ENCODE measurements at regions of chr2 and their contacts with region 1.

Region 1: GRCh38 chr2:224894356-224894755 is 147.9 kb downstream of the DOCK10 start:
- DNase-seq: no peak
- H3K4me3 Mint-ChIP-seq: peak overlapping the region; percentile 31
- H3K27ac Mint-ChIP-seq: peak overlapping the region; percentile 82
- H3K4me1 Mint-ChIP-seq: peaks cover 58% of the 10 kb centered on the region
- H3K27me3 Mint-ChIP-seq: no peaks in the 10 kb centered on the region

Region 2: GRCh38 chr2:224904381-224904780 is 10.0 kb after region 1 on chr2:
- CTCF ChIA-PET with region 1: no interaction called
- POLR2A ChIA-PET with region 1: no interaction called
- intact Hi-C with region 1: loop called (anchors 1 kb)
- DNase-seq: no peak
- H3K4me3 Mint-ChIP-seq: no peak overlapping the region
- H3K27ac Mint-ChIP-seq: no peak overlapping the region
- H3K4me1 Mint-ChIP-seq: peaks cover 53% of the 10 kb centered on the region
- H3K27me3 Mint-ChIP-seq: no peaks in the 10 kb centered on the region

Region 3: GRCh38 chr2:224909885-224910573 is 15.7 kb after region 1 on chr2:
- CTCF ChIA-PET with region 1: no interaction called
- POLR2A ChIA-PET with region 1: no interaction called
- intact Hi-C with region 1: loop called (anchors 1 kb)
- DNase-seq: peak; percentile 47
- H3K4me3 Mint-ChIP-seq: no peak overlapping the region
- H3K27ac Mint-ChIP-seq: peak overlapping the region; percentile 69
- H3K4me1 Mint-ChIP-seq: peaks cover 47% of the 10 kb centered on the region
- H3K27me3 Mint-ChIP-seq: no peaks in the 10 kb centered on the region

Region 4: DNA sequence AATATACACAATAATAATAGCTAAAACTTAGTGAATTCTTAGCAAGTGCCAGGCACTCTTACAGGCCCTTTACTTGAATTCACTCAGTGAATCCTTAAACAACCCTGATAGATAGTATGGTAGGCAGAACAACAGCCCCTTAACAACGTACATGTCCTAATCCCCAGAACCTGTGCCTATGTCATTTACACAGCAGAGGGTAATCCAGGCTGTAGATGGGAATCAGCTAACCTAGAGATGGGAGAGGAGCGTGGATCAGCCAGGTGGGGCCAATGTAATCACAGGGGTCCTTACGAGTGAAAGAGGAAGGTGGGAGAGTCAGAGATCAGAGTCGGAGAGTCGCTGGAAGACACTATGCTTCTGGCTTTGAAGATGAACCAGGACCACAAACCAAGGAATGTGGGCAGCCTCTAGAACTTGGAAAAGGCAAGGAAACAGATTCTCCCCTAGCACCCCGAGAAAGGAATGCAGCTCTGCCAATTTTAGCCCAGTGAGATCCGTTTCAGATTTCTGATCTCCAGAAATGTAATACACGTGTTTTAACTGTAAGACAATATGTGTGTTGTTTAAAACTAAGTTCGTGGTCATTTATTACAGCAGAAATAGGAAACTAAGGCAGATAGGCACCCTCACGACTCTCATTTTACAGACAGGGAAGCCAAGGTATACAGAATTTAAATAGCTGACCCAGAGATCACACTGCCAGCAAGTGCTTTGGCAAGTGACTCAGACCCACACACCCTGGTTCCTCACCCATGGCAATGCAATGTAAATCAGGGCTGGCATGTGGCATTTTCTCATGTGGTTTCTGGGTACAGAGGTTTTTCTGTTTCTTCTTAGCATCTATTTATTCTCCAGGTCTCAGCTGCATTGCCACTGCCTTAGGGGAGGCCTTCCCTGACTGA is 79.0 kb after region 1 on chr2:
- CTCF ChIA-PET with region 1: no interaction called
- POLR2A ChIA-PET with region 1: no interaction called
- intact Hi-C with region 1: no loop called
- DNase-seq: peak; percentile 43
- H3K4me3 Mint-ChIP-seq: no peak overlapping the region
- H3K27ac Mint-ChIP-seq: peak overlapping the region; percentile 35
- H3K4me1 Mint-ChIP-seq: peaks cover 76% of the 10 kb centered on the region
- H3K27me3 Mint-ChIP-seq: no peaks in the 10 kb centered on the region

Region 5: GRCh38 chr2:225017713-225018112 is 123.4 kb after region 1 on chr2:
- CTCF ChIA-PET with region 1: no interaction called
- POLR2A ChIA-PET with region 1: no interaction called
- intact Hi-C with region 1: no loop called
- DNase-seq: no peak
- H3K4me3 Mint-ChIP-seq: no peak overlapping the region
- H3K27ac Mint-ChIP-seq: peak overlapping the region; percentile 3
- H3K4me1 Mint-ChIP-seq: peaks cover 75% of the 10 kb centered on the region
- H3K27me3 Mint-ChIP-seq: no peaks in the 10 kb centered on the region

Region 6: DNA sequence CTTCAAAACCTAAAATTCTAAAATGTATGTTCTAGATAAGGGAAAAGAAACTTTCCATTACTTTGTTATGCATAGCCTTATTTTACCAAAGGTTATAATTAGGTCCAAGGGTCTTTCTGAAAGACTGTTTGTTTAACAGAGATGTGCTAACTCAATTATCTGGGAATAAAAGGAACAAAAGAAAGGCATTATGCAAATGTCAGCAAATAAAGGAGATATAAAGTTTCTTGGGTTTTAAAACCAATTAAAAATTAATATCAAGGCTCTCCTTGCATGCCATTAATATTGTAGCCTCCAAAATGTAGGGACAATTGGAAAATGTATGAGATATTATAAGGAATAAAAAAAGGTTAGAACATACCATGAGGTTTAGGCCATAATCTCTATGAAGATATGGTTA is 235.7 kb after region 1 on chr2:
- CTCF ChIA-PET with region 1: no interaction called
- POLR2A ChIA-PET with region 1: no interaction called
- intact Hi-C with region 1: no loop called
- DNase-seq: no peak
- H3K4me3 Mint-ChIP-seq: no peak overlapping the region
- H3K27ac Mint-ChIP-seq: no peak overlapping the region
- H3K4me1 Mint-ChIP-seq: no peaks in the 10 kb centered on the region
- H3K27me3 Mint-ChIP-seq: peaks cover 2% of the 10 kb centered on the region